ENCODE measurements at regions of chr7 and their contacts with region 1.

Region 1: GRCh38 chr7:151315038-151315655 is 26.5 kb upstream of the NUB1 start:
- DNase-seq: peak; percentile 82
- CTCF ChIP-seq: peak; percentile 72

Region 2: DNA sequence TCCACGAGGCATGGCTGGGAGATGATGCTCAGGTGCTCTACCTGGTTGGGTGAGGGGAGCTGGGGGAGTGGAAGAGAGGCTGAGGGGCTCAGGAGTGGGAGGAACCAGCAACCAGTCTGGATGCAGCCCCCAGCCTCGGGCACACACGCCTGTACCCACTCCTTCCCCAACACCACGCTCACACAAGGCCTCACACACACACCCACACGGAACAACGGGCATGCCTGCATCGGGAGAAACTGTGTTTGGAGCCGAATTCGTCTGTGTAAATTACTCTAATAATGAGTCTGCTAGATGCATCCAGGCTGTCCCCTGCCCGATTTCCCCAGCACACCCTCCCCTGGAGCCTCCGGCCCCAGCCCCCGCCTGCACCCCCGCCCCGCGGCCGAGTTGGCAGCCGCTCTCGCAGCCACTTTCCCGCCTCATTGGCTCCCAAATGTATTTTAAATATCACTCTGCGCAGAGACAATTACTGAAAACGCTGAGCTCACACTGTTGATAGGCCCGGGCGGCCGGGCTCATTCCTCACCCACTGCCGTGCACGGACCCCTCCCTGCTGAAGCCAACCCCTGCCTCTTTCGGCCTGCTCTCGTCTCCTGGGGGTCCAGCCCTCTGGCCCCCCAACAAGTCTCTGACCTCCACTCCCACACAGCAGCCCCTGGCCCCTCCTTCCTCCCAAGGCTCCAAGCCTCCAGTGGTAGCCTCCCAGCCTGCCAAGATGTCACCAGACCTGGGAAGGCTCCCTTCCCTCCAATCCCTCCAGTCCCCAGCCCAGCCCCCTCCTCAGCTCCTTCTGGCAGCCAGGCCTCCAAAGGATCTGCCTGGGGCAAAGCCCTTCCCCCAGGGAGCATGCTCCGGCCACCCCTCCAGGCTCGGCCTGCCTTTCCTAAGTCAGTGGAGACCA is 116.0 kb before region 1 on chr7:
- CTCF ChIA-PET with region 1: no interaction called
- POLR2A ChIA-PET with region 1: no interaction called
- DNase-seq: no peak
- CTCF ChIP-seq: no peak

Region 3: DNA sequence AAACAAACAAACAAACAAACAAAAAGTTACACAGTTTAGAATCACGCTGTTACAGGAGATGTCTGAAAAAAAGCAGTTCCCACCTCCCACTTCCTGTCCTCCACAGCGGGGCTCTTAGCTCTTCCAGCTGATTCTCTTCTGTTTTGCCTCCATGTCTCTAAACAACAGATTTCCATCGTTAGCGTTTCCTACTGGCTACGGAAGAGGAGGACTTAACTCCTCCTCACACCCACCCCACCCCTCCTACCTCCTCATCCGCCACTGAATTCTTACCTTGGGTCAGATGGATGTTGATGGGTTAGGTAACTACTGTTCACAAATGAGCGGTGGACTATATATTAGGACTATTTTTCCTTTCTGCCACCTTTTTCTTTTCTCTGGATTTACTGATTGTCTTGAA is 10.3 kb before region 1 on chr7:
- CTCF ChIA-PET with region 1: interaction called, 49 read pairs
- POLR2A ChIA-PET with region 1: no interaction called
- DNase-seq: peak; percentile 7
- CTCF ChIP-seq: no peak

Region 4: GRCh38 chr7:151327659-151328058 is 12.5 kb after region 1 on chr7:
- CTCF ChIA-PET with region 1: interaction called, 50 read pairs
- POLR2A ChIA-PET with region 1: no interaction called
- DNase-seq: no peak
- CTCF ChIP-seq: no peak

Region 5: DNA sequence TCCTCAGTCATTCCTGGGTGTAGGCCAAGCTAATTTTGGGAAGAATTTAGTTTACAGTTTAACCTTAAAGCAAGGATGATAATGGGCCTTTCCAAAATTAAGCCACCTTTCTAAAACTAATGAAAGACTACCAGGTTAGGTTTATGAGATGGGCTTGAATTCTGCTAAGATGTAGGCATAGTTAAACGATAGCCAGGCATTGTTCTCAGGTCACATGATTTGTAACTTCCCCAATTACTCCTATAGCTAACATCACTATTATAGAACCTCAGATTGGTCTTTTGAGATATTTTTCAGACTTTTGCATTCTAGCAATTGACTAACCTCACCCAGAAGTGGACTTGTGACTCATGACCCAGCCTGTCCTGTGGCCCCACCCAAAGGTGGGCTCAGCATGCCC is 19.5 kb after region 1 on chr7:
- CTCF ChIA-PET with region 1: interaction called, 22 read pairs
- POLR2A ChIA-PET with region 1: no interaction called
- DNase-seq: no peak
- CTCF ChIP-seq: no peak

Region 6: GRCh38 chr7:151341357-151342101 is 26.4 kb after region 1 on chr7 and contains the start of gene NUB1:
- CTCF ChIA-PET with region 1: interaction called, 31 read pairs
- POLR2A ChIA-PET with region 1: no interaction called
- DNase-seq: peak; percentile 90
- CTCF ChIP-seq: no peak

Region 7: DNA sequence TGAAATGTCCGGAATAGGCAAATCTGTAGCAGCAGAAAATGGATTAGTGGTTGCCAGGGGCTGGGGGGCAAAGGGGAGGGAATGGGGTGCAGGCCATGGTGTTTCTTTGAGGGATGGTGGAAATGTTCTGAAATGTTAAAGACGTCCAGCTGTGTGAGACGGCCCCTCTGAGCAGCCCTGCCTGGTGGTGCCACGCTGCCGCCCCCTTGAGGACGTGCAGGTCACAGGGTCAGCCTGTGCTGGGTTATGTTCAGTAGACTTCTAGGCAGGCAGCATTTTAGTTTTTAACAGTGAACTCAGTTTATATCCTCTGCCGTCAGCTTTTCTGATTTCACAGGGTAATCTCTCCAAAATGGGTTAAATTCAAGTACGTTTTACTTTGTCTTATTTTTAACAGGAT is 35.9 kb after region 1 on chr7:
- CTCF ChIA-PET with region 1: interaction called, 116 read pairs
- POLR2A ChIA-PET with region 1: no interaction called
- DNase-seq: no peak
- CTCF ChIP-seq: peak; percentile 51

Region 8: GRCh38 chr7:151759591-151760042 is 444.5 kb after region 1 on chr7:
- CTCF ChIA-PET with region 1: interaction called, 10 read pairs
- POLR2A ChIA-PET with region 1: no interaction called
- DNase-seq: peak; percentile 79
- CTCF ChIP-seq: peak; percentile 86